ENCODE measurements at regions of chr5 and their contacts with region 1.

Region 1: DNA sequence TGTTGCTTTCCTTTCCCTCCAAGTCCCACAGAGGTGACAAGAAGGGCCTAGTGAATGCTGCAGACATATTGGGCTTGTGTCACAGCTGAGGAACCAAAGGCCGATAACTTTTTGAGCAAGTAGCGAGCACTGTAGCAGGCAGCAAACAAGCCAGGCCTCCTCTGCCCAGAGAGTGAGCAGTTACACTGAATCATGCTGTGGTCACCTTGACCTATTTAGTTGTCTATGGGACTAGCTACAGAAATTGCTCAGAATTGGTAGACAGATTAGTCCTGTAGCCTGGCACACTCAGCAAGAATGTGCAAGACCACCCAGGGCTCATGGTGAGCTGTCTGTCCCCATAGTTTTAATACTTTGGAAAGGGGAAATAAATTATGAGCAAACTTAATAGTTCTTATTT is 25.2 kb downstream of the ZCCHC9 start:
- DNase-seq: no peak
- H3K4me3 ChIP-seq: no peak overlapping the region
- H3K27ac ChIP-seq: no peak overlapping the region
- H3K4me1 ChIP-seq: no peaks in the 10 kb centered on the region
- H3K27me3 ChIP-seq: no peaks in the 10 kb centered on the region
- CTCF ChIP-seq: no peak
- POLR2A ChIP-seq: no peak

Region 2: GRCh38 chr5:81361600-81361999 is 35.0 kb after region 1 on chr5:
- CTCF ChIA-PET with region 1: interaction called, 3 read pairs
- POLR2A ChIA-PET with region 1: no interaction called
- dilution Hi-C with region 1: no loop called
- intact Hi-C with region 1: loop called (anchors 1 kb)
- DNase-seq: no peak
- H3K4me3 ChIP-seq: no peak overlapping the region
- H3K27ac ChIP-seq: no peak overlapping the region
- H3K4me1 ChIP-seq: no peaks in the 10 kb centered on the region
- H3K27me3 ChIP-seq: peaks cover 0 to 2% of the 10 kb centered on the region in 2 experiments
- CTCF ChIP-seq: no peak
- POLR2A ChIP-seq: no peak